ENCODE measurements at regions of chr1 and their contacts with region 1.

Region 1: DNA sequence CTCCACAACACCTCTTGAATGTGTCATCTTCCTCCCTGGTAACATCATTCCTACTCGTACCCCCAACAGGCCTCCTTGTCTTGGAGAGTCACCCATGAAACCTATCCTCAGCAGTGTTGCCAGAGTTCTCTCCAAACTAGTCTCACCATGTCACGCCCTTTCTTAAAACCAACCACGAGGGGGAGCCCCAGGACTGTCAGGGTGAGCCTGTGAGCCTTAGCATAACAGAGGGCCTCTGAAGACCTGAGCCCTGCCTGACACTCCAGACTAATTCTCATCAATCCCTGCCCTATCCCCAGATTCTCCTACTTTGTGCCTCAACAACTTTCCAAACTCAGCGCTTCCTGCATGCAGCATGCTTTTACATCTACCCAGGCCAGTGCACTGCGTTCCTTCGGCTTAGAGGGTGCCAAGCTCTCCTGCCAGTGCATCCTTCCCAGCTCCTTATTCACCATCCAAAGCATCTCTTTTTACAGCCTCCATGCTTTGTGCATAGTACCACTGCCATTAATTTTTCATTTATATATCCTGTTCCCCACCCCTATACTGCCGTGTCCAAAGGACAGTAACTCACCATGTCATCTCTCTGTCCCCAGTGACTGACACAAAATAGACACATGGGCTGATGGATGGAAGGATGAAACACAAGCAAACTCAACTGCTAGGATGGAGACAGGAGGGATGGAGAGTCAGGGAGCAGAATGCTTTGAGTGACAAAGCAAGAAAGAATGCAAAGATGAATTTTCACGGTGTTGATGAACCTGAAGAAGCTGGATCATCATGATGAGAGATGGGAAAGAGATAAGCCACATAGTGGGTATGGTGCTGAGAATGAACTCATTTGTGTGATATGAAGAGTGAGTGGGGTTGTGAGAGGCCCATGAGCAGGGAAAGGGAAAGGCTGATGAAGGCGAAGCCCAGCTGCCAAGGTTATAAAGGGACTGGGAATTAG is 34.0 kb downstream of the ZNF697 start:
- DNase-seq: peak; percentile 86
- ATAC-seq: peak; percentile 94

Region 2: GRCh38 chr1:119662034-119662437 is 48.0 kb after region 1 on chr1:
- intact Hi-C with region 1: loop called (anchors 1 kb)
- DNase-seq: no peak
- ATAC-seq: no peak

Region 3: DNA sequence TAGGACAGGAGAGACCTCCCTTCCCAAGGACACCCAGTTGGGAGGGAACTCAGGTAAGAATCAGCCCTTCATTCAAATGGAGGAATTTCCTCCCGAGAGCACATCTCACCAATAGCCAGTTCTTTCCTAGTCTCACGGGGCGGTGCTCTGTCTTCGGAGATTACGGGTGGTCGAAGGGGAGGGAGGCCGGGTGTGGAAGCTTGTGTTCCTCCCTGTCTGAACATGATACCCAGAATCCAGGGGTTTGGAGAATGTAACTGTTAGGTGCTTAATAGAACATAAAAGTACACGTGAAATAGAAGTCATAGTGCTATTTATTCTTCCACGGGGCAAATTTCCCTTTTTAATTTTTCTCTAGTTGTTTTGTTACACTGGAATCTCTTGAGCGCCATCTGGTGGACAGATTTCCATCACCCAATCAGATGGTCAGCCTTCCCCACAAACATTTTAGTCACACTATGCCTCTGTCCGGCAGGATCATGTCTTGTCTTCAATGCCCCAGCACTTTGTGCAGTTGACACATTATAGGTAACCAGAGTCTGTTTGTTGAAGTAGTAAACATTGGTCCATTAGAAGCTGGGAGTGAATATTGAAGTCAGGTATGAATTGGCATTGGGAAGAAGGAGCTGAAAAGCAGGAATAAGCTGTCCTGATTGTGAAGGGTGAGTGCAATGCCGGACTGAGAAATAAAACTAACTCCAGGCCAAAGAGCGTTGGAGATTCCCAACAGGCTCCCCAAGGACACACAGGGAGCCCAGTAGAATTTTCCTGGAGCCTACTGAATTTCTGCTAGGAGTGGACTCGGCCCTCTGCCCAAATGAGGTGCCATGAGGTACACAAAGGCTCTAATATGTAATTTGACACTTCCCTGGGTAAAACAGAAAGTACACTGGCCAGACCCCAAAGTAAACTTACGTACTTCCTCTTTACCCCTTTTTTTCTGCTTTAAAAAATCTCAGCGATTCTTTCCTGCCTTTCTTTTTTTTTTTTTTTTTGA is 61.6 kb after region 1 on chr1:
- intact Hi-C with region 1: loop called (anchors 5 kb)
- DNase-seq: no peak
- ATAC-seq: peak; percentile 56